ENCODE measurements at regions of chr3 and their contacts with region 1.

Region 1: GRCh38 chr3:47475570-47476329 is at the start of gene SCAP:
- DNase-seq: peak; percentile 98
- ATAC-seq: peak; percentile 95
- H3K4me3 Mint-ChIP-seq: peak within 1 kb of the TSS; percentile 89
- H3K27ac Mint-ChIP-seq: peak within 1 kb of the TSS; percentile 84
- H3K4me1 Mint-ChIP-seq: peaks cover 33% of the 10 kb centered on the region
- H3K27me3 Mint-ChIP-seq: no peaks in the 10 kb centered on the region
- total RNA-seq, gene SCAP: 44.5 to 51.2 TPM

Region 2: DNA sequence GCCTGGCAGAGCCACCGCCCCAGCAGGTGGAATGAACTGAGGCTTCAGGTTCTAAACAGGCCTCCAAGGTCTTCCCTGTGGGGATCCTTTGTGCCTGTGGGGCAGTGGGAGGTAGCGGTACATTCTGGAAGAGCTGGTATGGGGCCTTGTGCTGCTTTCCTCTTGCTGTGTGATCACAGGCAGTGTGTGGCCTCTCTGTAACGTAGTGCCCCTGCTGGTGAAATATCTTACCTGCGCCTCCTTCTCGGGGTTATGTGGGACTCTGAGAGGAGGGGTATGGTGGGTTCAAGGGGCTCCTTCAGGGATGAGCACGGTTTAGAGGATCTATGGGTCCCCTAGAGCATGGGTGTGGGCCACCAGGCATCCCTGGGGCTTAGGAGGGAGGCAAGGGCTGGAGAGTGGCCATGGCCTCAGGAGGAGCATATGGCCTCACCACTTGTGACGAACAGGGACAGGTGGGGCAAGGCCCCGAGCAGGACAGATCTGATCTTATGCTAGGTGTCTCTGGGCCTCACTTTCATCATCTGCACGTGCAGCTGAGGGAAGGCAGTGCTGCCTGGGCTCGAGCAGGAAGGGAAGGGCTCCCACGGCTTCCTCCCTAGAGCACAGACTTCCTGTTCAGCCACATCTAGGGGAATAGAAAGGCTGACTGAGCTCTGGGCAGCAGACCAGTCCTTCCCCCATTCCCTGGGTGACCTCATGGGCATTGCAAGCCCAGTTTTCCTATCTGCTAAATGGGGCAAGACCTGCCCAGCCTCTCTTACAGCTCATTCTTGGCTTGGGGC is 780.4 kb before region 1 on chr3:
- CTCF ChIA-PET with region 1: no interaction called
- POLR2A ChIA-PET with region 1: no interaction called
- intact Hi-C with region 1: no loop called
- DNase-seq: peak; percentile 69
- ATAC-seq: peak; percentile 61
- H3K4me3 Mint-ChIP-seq: peak overlapping the region; percentile 73
- H3K27ac Mint-ChIP-seq: peak overlapping the region; percentile 90
- H3K4me1 Mint-ChIP-seq: peaks cover 56% of the 10 kb centered on the region
- H3K27me3 Mint-ChIP-seq: no peaks in the 10 kb centered on the region

Region 3: GRCh38 chr3:47009225-47010110 is 466.3 kb before region 1 on chr3:
- CTCF ChIA-PET with region 1: no interaction called
- POLR2A ChIA-PET with region 1: no interaction called
- intact Hi-C with region 1: no loop called
- DNase-seq: peak; percentile 84
- ATAC-seq: peak; percentile 93
- H3K4me3 Mint-ChIP-seq: peak overlapping the region; percentile 57
- H3K27ac Mint-ChIP-seq: peak overlapping the region; percentile 58
- H3K4me1 Mint-ChIP-seq: peaks cover 4% of the 10 kb centered on the region
- H3K27me3 Mint-ChIP-seq: no peaks in the 10 kb centered on the region

Region 4: GRCh38 chr3:47296562-47297302 is 179.0 kb before region 1 on chr3:
- CTCF ChIA-PET with region 1: no interaction called
- POLR2A ChIA-PET with region 1: no interaction called
- intact Hi-C with region 1: no loop called
- DNase-seq: no peak
- ATAC-seq: no peak
- H3K4me3 Mint-ChIP-seq: no peak overlapping the region
- H3K27ac Mint-ChIP-seq: no peak overlapping the region
- H3K4me1 Mint-ChIP-seq: peaks cover 41% of the 10 kb centered on the region
- H3K27me3 Mint-ChIP-seq: no peaks in the 10 kb centered on the region

Region 5: DNA sequence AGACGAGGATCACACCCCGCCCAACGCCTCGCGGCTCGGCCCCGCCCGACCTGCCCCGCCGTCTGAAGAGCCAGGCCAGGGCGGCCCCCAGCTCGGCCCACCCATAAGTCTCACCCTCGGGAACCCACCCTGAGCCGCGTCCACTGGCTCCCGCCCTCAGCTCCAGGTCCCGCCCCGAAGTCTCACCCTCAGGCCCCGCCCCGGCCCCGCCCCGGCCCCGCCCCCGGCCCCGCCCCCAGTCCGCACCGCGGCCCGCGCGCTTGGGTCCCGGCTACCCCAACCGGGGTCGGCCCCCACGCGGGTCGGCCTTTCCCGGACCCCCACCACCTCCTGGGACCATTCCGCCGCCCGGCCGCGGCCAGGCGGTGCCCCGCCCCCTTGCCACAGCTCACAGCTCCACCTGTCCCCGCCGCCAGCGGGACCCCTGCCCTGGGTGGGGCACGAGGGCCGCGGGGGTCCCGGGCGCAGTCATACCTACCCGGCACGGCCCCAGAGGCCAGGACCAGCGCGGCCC is 102.4 kb after region 1 on chr3:
- CTCF ChIA-PET with region 1: interaction called, 4 read pairs
- POLR2A ChIA-PET with region 1: no interaction called
- intact Hi-C with region 1: loop called in 1 of 2 experiments (anchors 1 kb)
- DNase-seq: peak; percentile 61
- ATAC-seq: peak; percentile 75
- H3K4me3 Mint-ChIP-seq: peak overlapping the region; percentile 52
- H3K27ac Mint-ChIP-seq: no peak overlapping the region
- H3K4me1 Mint-ChIP-seq: no peaks in the 10 kb centered on the region
- H3K27me3 Mint-ChIP-seq: peaks cover 18% of the 10 kb centered on the region

Region 6: DNA sequence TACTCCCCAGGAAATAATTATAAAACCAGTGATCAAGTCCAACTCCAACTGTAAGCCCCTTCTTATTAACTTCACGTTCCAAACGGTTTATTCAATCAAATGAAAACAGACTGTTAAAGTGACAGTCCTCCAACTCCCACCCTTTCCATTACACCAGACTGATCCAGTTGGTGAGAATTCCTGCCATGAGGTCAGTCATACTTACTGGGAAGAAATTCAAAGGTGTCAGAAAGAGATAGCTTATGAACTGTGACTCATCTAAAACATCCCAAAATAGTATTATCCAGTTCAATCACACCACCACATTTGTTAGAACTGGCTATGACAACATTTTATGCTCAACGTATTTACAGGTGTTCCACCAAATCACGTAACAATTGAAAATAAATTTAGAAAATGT is 286.5 kb after region 1 on chr3:
- CTCF ChIA-PET with region 1: no interaction called
- POLR2A ChIA-PET with region 1: no interaction called
- intact Hi-C with region 1: no loop called
- DNase-seq: no peak
- ATAC-seq: no peak
- H3K4me3 Mint-ChIP-seq: no peak overlapping the region
- H3K27ac Mint-ChIP-seq: peak overlapping the region; percentile 27
- H3K4me1 Mint-ChIP-seq: peaks cover 5% of the 10 kb centered on the region
- H3K27me3 Mint-ChIP-seq: no peaks in the 10 kb centered on the region

Region 7: GRCh38 chr3:47802734-47803477 is 327.2 kb after region 1 on chr3 and contains the start of gene DHX30:
- CTCF ChIA-PET with region 1: no interaction called
- POLR2A ChIA-PET with region 1: no interaction called
- intact Hi-C with region 1: loop called in 1 of 2 experiments (anchors 1 kb)
- DNase-seq: peak; percentile 93
- ATAC-seq: peak; percentile 92
- H3K4me3 Mint-ChIP-seq: peak within 1 kb of the TSS; percentile 96
- H3K27ac Mint-ChIP-seq: peak within 1 kb of the TSS; percentile 98
- H3K4me1 Mint-ChIP-seq: peaks cover 24% of the 10 kb centered on the region
- H3K27me3 Mint-ChIP-seq: no peaks in the 10 kb centered on the region
- total RNA-seq, gene DHX30: 81.6 to 82.3 TPM

Measured in activated CD4-positive, alpha-beta T cell treated with anti-CD3 and anti-CD28 coated beads for 36 hours (primary cell).